K562 (cell line): ENCODE measurements at regions of chr7 and their contacts with region 1.

Region 1: GRCh38 chr7:143008007-143008901 is 18.7 kb downstream of the OR9A2 start:
- DNase-seq: peak; percentile 83 to 96 (median 92)
- ATAC-seq: peak; percentile 97
- H3K4me3 ChIP-seq: no peak overlapping the region
- H3K27ac ChIP-seq: no peak overlapping the region
- H3K4me1 ChIP-seq: no peaks in the 10 kb centered on the region
- H3K27me3 ChIP-seq: peaks cover 14 to 26% of the 10 kb centered on the region in 2 experiments
- CTCF ChIP-seq: peak; percentile 98
- EP300 ChIP-seq: no peak
- POLR2A ChIP-seq: no peak
- RAD21 ChIP-seq: peak; percentile 97

Region 2: DNA sequence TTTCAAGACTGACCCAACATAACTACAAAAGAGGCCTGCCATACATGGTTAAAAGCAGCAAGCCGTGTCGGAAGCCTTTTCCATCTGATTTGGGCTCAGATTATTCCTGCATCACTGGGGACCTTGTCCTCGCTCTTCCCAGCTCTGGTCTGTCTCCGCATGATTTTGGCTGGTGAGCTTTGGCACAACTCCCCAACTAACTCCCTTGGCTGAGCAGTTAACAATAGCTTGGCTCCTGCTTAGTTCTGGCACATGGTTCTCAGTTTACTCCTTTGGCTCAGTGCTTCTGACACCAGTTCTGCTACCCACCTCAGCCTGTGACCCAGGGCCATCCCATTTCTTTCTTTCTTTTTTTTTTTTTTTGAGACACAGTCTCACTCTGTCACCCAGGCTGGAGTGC is 1440.0 kb before region 1 on chr7:
- CTCF ChIA-PET with region 1: no interaction called
- POLR2A ChIA-PET with region 1: no interaction called
- in situ Hi-C with region 1: no loop called
- intact Hi-C with region 1: no loop called
- DNase-seq: no peak
- ATAC-seq: no peak
- H3K4me3 ChIP-seq: no peak overlapping the region
- H3K27ac ChIP-seq: no peak overlapping the region
- H3K4me1 ChIP-seq: no peaks in the 10 kb centered on the region
- H3K27me3 ChIP-seq: no peaks in the 10 kb centered on the region
- CTCF ChIP-seq: no peak
- EP300 ChIP-seq: no peak
- POLR2A ChIP-seq: no peak
- RAD21 ChIP-seq: no peak

Region 3: DNA sequence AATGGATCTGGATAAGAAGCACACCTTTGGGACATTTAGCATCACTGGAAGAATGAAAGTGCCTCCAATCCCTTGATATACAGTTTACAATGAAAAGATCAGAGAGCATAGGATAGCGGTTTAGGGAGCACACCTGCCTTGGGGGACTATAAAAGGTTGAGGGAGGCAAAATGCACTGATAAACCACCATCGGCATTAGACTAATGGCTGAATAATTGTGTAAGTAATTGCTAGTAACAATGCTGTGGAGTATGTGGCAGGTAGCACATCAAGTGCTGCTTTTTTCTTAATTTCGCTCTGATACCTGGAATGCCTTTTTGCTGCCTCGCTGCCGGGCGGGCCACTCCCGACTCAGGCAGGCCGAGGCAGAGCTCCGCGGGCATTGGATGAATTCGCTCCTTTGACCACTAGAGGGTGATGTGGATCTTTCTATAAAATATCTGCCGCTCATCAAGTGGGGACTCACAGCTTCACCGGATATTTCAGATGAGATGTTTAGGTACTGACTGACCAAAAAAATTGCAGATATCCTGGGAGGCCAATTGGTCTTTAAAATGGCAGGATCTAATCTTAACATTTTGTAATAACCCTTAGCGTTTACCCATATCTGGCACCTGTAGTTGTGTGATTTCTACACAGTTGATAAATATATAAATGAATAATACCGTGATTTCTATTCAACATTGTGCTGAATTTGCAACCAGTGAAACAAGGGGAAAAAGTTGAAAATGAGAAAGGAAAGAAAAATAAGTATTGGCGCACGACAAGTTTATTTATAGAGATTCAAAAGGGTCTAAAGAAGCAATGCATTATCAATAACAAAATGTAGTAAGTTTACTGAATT is 375.7 kb before region 1 on chr7:
- CTCF ChIA-PET with region 1: interaction called, 8 read pairs
- POLR2A ChIA-PET with region 1: no interaction called
- in situ Hi-C with region 1: loop called (anchors 25 kb)
- intact Hi-C with region 1: loop called (anchors 5 kb)
- DNase-seq: peak; percentile 80 to 85 (median 84)
- ATAC-seq: peak; percentile 98
- H3K4me3 ChIP-seq: no peak overlapping the region
- H3K27ac ChIP-seq: no peak overlapping the region
- H3K4me1 ChIP-seq: no peaks in the 10 kb centered on the region
- H3K27me3 ChIP-seq: peaks cover 0 to 5% of the 10 kb centered on the region in 2 experiments; a peak in 3 of 5 replicates
- CTCF ChIP-seq: peak; percentile 89 to 90 (median 89)
- EP300 ChIP-seq: no peak
- POLR2A ChIP-seq: no peak
- RAD21 ChIP-seq: peak; percentile 81 to 83

Region 4: GRCh38 chr7:142873281-142873787 is 134.9 kb before region 1 on chr7:
- CTCF ChIA-PET with region 1: interaction called, 31 read pairs
- POLR2A ChIA-PET with region 1: interaction called, 4 read pairs
- in situ Hi-C with region 1: loop called (anchors 5 kb)
- intact Hi-C with region 1: no loop called
- DNase-seq: peak; percentile 72 to 93 (median 88)
- ATAC-seq: peak; percentile 92
- H3K4me3 ChIP-seq: no peak overlapping the region
- H3K27ac ChIP-seq: no peak overlapping the region
- H3K4me1 ChIP-seq: peaks cover 0 to 10% of the 10 kb centered on the region in 2 experiments; a peak in 1 of 5 replicates
- H3K27me3 ChIP-seq: peaks cover 12 to 72% of the 10 kb centered on the region in 2 experiments
- CTCF ChIP-seq: peak; percentile 89 to 96 (median 94)
- EP300 ChIP-seq: no peak
- POLR2A ChIP-seq: no peak
- RAD21 ChIP-seq: peak; percentile 53 to 79

Region 5: GRCh38 chr7:142908921-142909890 is 99.0 kb before region 1 on chr7:
- CTCF ChIA-PET with region 1: interaction called, 7 read pairs
- POLR2A ChIA-PET with region 1: interaction called, 4 read pairs
- in situ Hi-C with region 1: no loop called
- intact Hi-C with region 1: loop called (anchors 1 kb)
- DNase-seq: peak; percentile 51 to 63 (median 56)
- ATAC-seq: peak; percentile 93
- H3K4me3 ChIP-seq: no peak overlapping the region
- H3K27ac ChIP-seq: no peak overlapping the region
- H3K4me1 ChIP-seq: peaks cover 4 to 5% of the 10 kb centered on the region in 2 experiments; a peak in 3 of 5 replicates
- H3K27me3 ChIP-seq: peaks cover 0 to 22% of the 10 kb centered on the region in 2 experiments; a peak in 3 of 5 replicates
- CTCF ChIP-seq: peak; percentile 64 to 73 (median 72)
- EP300 ChIP-seq: no peak
- POLR2A ChIP-seq: no peak
- RAD21 ChIP-seq: peak; percentile 52 to 55

Region 6: GRCh38 chr7:142960955-142961512 is 47.2 kb before region 1 on chr7:
- CTCF ChIA-PET with region 1: interaction called, 4 read pairs
- POLR2A ChIA-PET with region 1: no interaction called
- in situ Hi-C with region 1: no loop called
- intact Hi-C with region 1: loop called (anchors 2 kb)
- DNase-seq: peak; percentile 71 to 77 (median 74)
- ATAC-seq: peak; percentile 69
- H3K4me3 ChIP-seq: peak overlapping the region; percentile 56
- H3K27ac ChIP-seq: peak overlapping the region; percentile 74; the same call in 1 of the 3 replicates
- H3K4me1 ChIP-seq: peaks cover 44 to 79% of the 10 kb centered on the region in 2 experiments
- H3K27me3 ChIP-seq: no peaks in the 10 kb centered on the region
- CTCF ChIP-seq: peak; percentile 85 to 89 (median 87)
- EP300 ChIP-seq: no peak
- POLR2A ChIP-seq: no peak
- RAD21 ChIP-seq: peak; percentile 54 to 82

Region 7: DNA sequence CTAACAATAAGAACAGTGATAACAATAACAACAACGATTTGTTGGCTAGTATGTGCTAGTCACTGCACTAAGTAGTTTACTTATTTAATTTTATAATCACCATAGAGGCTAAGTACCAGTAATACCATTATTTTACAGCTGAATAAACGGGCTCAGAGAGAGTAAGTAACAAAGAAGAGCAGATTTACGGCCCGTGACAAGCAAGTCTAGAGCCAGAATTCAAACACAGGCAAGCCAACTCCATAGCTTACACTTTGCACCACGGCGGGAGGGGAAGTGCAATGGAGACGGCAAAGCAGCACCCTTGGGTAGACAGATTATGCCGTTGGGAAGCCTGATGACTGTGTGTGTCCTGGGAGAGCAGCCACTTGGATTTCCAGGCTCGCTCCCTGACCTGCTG is 42.7 kb after region 1 on chr7:
- CTCF ChIA-PET with region 1: no interaction called
- POLR2A ChIA-PET with region 1: no interaction called
- in situ Hi-C with region 1: no loop called
- intact Hi-C with region 1: no loop called
- DNase-seq: no peak
- ATAC-seq: peak; percentile 44; the same call in 2 of the 3 replicates
- H3K4me3 ChIP-seq: no peak overlapping the region
- H3K27ac ChIP-seq: no peak overlapping the region
- H3K4me1 ChIP-seq: no peaks in the 10 kb centered on the region
- H3K27me3 ChIP-seq: peaks cover 10 to 21% of the 10 kb centered on the region in 2 experiments
- CTCF ChIP-seq: no peak
- EP300 ChIP-seq: no peak
- POLR2A ChIP-seq: no peak
- RAD21 ChIP-seq: no peak

Region 8: GRCh38 chr7:143305423-143306070 is 297.3 kb after region 1 on chr7:
- CTCF ChIA-PET with region 1: no interaction called
- POLR2A ChIA-PET with region 1: no interaction called
- in situ Hi-C with region 1: loop called (anchors 10 kb)
- intact Hi-C with region 1: loop called (anchors 1 kb)
- DNase-seq: peak; percentile 76 to 88 (median 78)
- ATAC-seq: peak; percentile 97
- H3K4me3 ChIP-seq: no peak overlapping the region
- H3K27ac ChIP-seq: no peak overlapping the region
- H3K4me1 ChIP-seq: no peaks in the 10 kb centered on the region
- H3K27me3 ChIP-seq: no peaks in the 10 kb centered on the region
- CTCF ChIP-seq: peak; percentile 96 to 98 (median 97)
- EP300 ChIP-seq: no peak
- POLR2A ChIP-seq: no peak; the same call in 1 of the 2 replicates
- RAD21 ChIP-seq: peak; percentile 73 to 84